ENCODE measurements at regions of chr19 and their contacts with region 1.

Region 1: GRCh38 chr19:48842789-48843162 is 6.5 kb upstream of the HSD17B14 start:
- DNase-seq: no peak
- H3K4me3 ChIP-seq: no peak overlapping the region
- H3K27ac ChIP-seq: no peak overlapping the region
- H3K27me3 ChIP-seq: no peaks in the 10 kb centered on the region
- CTCF ChIP-seq: peak; percentile 80

Region 2: DNA sequence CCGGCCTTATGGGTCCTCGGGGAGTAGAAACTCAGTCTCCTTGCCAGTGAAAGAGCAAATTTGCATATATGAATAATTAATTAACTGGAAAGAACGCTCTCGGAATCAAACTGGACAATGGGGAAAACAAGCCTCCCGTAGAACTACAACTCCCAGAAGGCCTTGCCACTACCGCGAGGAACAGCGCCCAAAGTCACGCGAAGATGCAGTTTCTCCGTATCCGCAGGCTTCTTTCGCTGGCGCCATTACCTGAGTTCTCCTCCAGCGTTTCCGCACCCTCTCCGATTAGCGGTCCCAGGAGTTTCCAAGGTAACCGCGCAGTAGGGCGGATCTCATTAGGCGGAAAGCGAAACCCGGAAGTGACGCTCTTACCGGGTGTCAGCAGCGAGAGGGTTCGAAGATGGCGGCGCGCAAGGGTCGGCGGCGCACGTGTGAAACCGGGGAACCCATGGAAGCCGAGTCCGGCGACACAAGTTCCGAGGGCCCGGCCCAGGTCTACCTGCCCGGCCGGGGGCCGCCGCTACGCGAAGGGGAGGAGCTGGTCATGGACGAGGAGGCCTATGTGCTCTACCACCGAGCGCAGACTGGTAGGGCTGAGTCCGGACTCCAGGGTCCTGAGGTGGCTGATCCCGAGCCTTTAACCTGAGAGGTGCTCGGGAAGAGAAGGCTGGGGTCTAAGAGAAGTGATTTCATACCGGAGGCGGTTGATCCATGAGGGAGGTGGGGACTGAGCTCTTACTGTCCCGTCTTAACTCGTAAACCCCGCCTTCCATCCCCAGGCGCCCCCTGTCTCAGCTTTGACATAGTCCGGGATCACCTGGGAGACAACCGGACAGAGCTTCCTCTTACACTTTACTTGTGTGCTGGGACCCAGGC is 396.9 kb before region 1 on chr19 and contains the start of gene GRWD1:
- CTCF ChIA-PET with region 1: interaction called, 10 read pairs
- POLR2A ChIA-PET with region 1: no interaction called
- DNase-seq: peak; percentile 81
- H3K4me3 ChIP-seq: peak within 1 kb of the TSS; percentile 96
- H3K27ac ChIP-seq: peak within 1 kb of the TSS; percentile 92
- H3K27me3 ChIP-seq: peaks cover 9% of the 10 kb centered on the region
- CTCF ChIP-seq: 0 out of 2 replicates have a peak, but pooled peaks have one; percentile 6
- polyA plus RNA-seq, gene GRWD1: 15.2 and 16.0 TPM in 2 replicates

Region 3: DNA sequence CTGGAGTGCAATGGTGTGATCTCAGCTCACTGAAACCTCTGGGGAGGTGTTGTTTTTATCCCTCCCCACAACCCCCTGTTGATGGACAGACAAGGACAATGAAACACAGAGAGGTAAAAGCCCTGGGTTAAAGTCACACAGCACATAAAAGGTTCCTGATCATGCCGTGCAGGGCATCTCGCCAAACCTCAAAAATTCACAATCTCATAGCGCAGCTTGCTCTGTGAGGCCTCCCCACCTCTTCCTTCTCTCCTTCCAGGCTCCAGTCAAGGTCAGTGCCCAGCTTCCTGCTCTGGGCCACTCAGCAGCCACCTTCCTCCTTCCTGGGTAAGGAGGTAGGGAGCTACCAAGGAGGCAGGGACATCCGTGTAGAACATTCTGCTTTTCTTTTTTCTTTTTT is 144.7 kb before region 1 on chr19:
- CTCF ChIA-PET with region 1: no interaction called
- POLR2A ChIA-PET with region 1: no interaction called
- DNase-seq: no peak
- H3K4me3 ChIP-seq: no peak overlapping the region
- H3K27ac ChIP-seq: no peak overlapping the region
- H3K27me3 ChIP-seq: peaks cover 14% of the 10 kb centered on the region
- CTCF ChIP-seq: no peak

Region 4: DNA sequence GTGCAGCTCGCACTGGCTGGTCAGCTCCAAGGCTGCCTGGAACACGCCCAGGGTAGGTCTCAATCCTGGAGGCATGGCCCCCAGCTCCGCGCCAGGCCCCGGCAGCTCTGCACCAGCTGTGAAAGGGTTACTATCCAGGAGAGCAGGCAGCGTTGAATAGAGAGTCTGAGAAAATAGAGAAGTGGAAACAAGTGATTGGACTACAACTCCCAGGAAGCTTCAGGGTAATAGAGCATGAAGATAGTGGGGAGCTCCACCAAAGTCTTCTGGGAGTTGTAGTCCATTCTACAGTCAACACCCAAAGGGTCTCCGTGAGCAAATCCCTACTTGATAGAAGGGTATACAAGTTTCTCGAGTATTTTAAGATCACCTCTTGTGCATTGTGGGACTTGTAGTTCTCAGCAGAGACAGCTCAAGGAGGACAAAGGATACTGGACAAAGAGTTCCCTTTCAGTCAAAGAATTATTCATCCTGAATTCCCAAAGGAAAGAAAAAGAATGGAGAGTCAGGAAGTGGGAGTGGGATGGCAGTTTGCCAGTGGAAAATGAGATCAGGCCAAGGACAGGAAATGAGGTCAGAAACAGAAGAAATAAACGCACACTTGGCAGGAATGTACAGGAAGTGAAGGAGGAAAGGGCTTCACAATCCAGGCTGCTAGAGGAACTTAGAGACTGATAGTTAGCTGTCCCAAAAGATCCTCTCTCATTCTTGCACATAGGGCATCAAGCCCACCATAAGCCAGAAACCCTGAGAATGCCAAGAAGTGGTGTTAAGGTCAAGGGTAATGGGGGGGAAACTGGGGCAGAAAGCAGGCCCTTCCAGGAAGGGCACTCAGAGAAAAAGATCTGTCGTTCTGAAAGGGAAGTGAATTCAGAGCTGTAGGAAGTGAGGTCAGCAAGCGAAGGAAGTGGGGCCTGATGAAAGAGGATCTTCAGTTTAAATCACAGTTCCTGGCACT is 117.7 kb before region 1 on chr19:
- CTCF ChIA-PET with region 1: no interaction called
- POLR2A ChIA-PET with region 1: no interaction called
- DNase-seq: peak; percentile 63
- H3K4me3 ChIP-seq: no peak overlapping the region
- H3K27ac ChIP-seq: peak overlapping the region; percentile 66
- H3K27me3 ChIP-seq: no peaks in the 10 kb centered on the region
- CTCF ChIP-seq: no peak

Region 5: DNA sequence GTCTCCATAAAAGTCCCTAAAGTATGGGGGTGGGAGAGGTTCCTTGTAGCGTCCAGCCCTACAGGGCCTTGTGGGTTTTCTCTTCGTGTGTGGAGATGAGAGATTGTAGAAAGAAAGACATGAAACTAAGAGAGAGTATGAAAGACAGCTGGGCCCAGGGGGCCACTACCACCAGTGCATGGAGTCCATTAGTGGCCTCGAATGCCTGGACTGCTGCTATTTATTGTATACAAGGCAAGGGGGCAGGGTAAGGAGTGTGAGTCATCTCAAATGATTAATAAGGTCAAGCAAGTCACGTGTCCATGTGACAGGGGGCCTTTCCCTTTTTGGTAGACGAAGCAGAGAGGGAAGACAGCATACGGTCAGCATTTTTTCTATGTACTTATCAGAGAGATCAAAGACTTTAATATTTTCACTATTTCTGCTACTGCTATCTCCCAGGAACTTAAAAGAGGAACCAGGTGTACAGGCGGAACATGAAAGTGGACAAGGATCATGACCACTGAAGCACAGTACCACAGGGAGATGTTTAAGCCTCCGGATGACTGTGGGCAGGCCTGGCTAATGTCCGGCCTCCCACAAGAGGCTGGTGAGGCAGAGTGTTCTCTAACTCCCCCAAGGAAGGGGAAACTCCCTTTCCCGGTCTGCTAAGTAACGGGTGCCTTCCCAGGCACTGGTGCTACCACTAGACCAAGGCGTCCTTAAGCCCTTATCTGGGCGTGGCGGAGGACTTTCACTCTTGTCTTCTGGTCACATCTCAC is 62.0 kb before region 1 on chr19:
- CTCF ChIA-PET with region 1: interaction called, 201 read pairs
- POLR2A ChIA-PET with region 1: no interaction called
- DNase-seq: no peak
- H3K4me3 ChIP-seq: no peak overlapping the region
- H3K27ac ChIP-seq: no peak overlapping the region
- H3K27me3 ChIP-seq: peaks cover 4% of the 10 kb centered on the region
- CTCF ChIP-seq: no peak

Region 6: DNA sequence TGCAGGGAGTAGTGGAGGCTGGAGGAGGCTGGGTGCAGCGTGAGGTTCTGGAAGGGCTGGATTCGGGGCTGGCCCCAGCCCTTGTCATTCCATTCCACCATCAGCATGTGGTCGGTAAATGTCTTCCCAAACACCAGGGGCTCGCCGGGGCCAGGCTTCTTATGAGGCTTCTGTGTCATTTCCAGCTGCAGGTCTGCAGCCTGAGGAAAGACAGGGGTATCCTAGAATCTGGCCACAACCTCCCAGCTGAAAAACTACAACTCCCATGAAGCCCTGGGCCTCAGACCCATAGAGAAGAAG is 36.3 kb before region 1 on chr19:
- CTCF ChIA-PET with region 1: interaction called, 10 read pairs
- POLR2A ChIA-PET with region 1: no interaction called
- DNase-seq: no peak
- H3K4me3 ChIP-seq: no peak overlapping the region
- H3K27ac ChIP-seq: no peak overlapping the region
- H3K27me3 ChIP-seq: no peaks in the 10 kb centered on the region
- CTCF ChIP-seq: no peak

Region 7: DNA sequence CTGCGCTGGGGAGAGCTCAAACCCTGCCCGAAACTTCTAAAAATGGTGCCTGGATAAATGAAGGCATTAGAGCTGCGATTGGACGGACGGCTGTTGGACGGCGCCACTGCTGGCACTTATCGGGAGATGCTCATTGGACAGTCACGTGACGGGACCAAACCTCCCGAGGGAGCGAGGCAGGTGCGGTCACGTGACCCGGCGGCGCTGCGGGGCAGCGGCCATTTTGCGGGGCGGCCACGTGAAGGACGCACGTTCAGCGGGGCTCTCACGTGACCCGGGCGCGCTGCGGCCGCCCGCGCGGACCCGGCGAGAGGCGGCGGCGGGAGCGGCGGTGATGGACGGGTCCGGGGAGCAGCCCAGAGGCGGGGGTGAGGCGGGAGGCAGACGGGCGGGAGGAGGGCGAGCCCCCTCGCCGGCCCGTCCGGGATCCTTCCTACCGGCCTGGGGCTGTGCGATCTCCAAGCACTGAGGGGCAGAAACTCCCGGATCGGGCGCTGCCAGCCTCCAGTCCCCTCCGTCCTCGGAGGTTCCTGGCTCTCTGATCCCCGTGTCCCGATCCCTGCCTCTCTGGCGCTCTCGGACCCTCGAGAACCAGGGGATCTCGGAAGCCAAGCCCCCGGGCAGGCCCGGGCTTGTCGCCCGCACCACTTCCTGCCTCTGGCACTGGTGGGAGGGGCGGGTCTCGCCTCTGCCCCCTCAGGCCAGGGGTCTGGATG is 112.0 kb after region 1 on chr19 and contains the start of gene BAX:
- CTCF ChIA-PET with region 1: interaction called, 6 read pairs
- POLR2A ChIA-PET with region 1: interaction called, 12 read pairs
- DNase-seq: peak; percentile 87
- H3K4me3 ChIP-seq: peak within 1 kb of the TSS; percentile 94
- H3K27ac ChIP-seq: peak within 1 kb of the TSS; percentile 95
- H3K27me3 ChIP-seq: no peaks in the 10 kb centered on the region
- CTCF ChIP-seq: 0 out of 2 replicates have a peak, but pooled peaks have one; percentile 3
- polyA plus RNA-seq, gene BAX: 110 and 147 TPM in 2 replicates

Region 8: GRCh38 chr19:48993175-48994034 is 150.6 kb after region 1 on chr19 and contains the starts of genes GYS1 and RUVBL2:
- CTCF ChIA-PET with region 1: interaction called, 10 read pairs
- POLR2A ChIA-PET with region 1: no interaction called
- DNase-seq: peak; percentile 99
- H3K4me3 ChIP-seq: peak within 1 kb of the TSS; percentile 96
- H3K27ac ChIP-seq: peak within 1 kb of the TSS; percentile 68
- H3K27me3 ChIP-seq: no peaks in the 10 kb centered on the region
- CTCF ChIP-seq: peak; percentile 88
- polyA plus RNA-seq, gene GYS1: 19.5 and 24.1 TPM in 2 replicates
- polyA plus RNA-seq, gene RUVBL2: 107 and 131 TPM in 2 replicates